Right cardiac atrium (tissue), 5 donors: ENCODE measurements at regions of chr9 and their contacts with region 1.

Region 1: DNA sequence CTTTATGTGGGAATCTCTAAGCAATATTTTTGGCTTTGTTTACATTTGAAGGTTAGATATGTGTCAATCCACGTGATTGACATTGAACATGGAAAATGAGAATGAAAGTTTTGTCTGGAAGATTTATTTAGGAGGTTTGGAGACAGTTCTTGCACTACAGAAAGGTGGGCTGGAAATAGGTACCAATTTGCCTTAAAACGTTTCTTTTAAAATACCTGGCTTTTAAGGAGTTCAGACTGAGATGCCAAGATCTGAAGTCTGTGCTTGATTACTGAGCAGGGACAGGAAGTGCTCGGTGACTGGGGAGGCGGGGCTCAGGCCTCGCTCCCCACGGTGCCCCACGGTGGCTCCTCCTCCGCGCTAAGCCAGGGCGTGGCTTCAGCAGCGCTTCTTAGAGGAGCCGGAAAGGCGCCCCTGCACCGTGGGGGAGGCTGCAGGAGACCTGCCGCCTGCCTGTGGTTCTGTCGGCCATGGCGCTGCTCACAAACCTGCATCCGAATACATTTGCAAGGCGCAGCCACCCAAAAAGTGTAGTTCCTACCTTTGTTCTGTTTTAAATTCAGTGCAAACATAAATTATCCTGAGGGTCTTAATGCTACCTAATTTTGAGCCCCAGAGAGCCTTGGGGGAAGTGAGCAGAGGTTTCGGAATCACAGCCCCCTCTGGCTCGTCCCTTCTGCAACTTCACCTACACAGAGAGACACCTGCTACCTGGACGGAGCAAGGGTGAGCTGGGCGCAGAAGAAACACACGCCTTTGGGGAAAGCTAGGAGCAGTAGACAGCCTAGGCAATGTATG is 49.2 kb downstream of the USP20 start:
- DNase-seq: peak; percentile 91 to 97 (median 96)
- ATAC-seq: peak; percentile 82 to 87
- H3K4me3 ChIP-seq: peak overlapping the region; percentile 15
- H3K27ac ChIP-seq: peak overlapping the region; percentile 3
- H3K4me1 ChIP-seq: no peaks in the 10 kb centered on the region
- H3K27me3 ChIP-seq: no peaks in the 10 kb centered on the region

Region 2: DNA sequence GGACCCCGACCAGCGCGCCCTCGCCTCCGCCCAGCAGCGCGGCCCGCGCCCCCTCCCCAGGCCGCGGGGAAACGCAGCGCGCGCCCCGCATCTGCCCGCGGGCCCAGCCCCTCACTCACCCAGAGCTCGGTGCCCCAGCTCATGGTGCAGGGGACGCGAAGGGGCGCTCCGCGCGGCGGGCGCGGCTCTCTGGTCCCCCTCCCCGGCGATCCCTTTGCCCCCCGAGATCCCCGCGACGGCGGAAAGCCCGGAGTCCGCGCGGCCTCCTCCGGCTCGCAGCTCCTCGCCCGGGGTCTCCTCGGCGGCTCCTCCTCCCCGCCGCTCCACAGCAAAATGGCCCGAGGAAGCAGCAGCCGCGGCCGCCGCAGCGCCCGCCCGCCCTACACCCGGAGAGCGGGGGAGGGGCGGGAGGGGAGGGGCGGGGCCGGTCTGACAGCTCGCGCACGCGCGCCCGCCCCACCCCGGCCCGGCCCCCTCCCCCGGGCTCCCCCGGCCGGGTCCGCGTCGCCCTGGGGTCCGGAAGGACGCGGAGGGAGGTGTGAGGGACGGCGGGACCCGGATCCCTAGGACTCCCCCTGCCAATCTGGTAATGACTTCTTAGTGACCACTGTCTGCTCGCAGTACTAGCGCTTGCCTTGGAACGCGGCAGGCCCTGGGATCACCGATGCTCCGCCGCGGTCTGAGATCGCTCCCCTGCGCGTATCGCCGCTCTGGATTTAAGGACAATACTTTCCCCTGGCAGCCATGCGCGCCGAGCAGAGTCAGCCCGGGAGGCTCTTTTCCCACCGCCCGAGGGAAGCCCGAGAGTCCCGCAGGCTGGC is 158.6 kb after region 1 on chr9 and contains the start of gene FNBP1:
- intact Hi-C with region 1: loop called in 3 of 4 experiments (anchors 5 to 10 kb)
- DNase-seq: peak; percentile 84 to 94 (median 94)
- ATAC-seq: peak; percentile 94 to 95
- H3K4me3 ChIP-seq: peak within 1 kb of the TSS; percentile 90
- H3K27ac ChIP-seq: peak within 1 kb of the TSS; percentile 86
- H3K4me1 ChIP-seq: no peaks in the 10 kb centered on the region
- H3K27me3 ChIP-seq: no peaks in the 10 kb centered on the region
- total RNA-seq, gene FNBP1: 26.2 to 27.5 (median 26.6) TPM

Region 3: GRCh38 chr9:130090915-130091314 is 206.5 kb after region 1 on chr9:
- intact Hi-C with region 1: loop called in 1 of 4 experiments (anchors 10 kb)
- DNase-seq: no peak
- ATAC-seq: no peak
- H3K4me3 ChIP-seq: no peak overlapping the region
- H3K27ac ChIP-seq: no peak overlapping the region
- H3K4me1 ChIP-seq: no peaks in the 10 kb centered on the region
- H3K27me3 ChIP-seq: no peaks in the 10 kb centered on the region